CD8-positive, alpha-beta T cell (primary cell): ENCODE measurements at regions of chr4 and their contacts with region 1.

Region 1: GRCh38 chr4:99033956-99034355 is 38.4 kb downstream of the METAP1 start:
- DNase-seq: no peak
- ATAC-seq: no peak
- H3K4me3 ChIP-seq: no peak overlapping the region
- H3K4me3 Mint-ChIP-seq: no peak overlapping the region
- H3K27ac ChIP-seq: no peak overlapping the region
- H3K27ac Mint-ChIP-seq: no peak overlapping the region
- H3K4me1 ChIP-seq: no peaks in the 10 kb centered on the region
- H3K4me1 Mint-ChIP-seq: peaks cover 26% of the 10 kb centered on the region
- H3K27me3 ChIP-seq: no peaks in the 10 kb centered on the region
- H3K27me3 Mint-ChIP-seq: no peaks in the 10 kb centered on the region
- CTCF ChIP-seq: no peak

Region 2: DNA sequence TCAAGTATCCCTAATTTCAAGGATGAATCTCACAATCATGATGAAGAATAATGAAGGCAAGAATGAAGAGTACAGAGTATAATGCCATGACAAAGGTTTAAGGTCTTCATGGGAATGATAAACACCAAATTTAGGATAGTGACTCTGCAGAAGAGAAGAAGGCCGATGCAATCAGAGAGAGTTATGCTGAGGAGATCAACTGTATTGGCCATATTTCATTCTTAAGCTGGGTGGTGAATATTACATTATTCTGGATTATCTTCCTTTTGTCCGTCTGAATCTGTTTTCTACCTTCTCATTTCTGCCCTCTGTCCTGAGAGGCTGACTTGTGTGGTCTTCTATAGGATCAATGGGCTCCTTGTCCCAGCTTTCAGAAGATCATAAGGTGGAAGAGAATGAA is 46.2 kb before region 1 on chr4:
- CTCF ChIA-PET with region 1: no interaction called
- POLR2A ChIA-PET with region 1: no interaction called
- intact Hi-C with region 1: loop called in 1 of 2 experiments (anchors 1 kb)
- DNase-seq: no peak
- ATAC-seq: no peak
- H3K4me3 ChIP-seq: no peak overlapping the region
- H3K4me3 Mint-ChIP-seq: no peak overlapping the region
- H3K27ac ChIP-seq: no peak overlapping the region
- H3K27ac Mint-ChIP-seq: no peak overlapping the region
- H3K4me1 ChIP-seq: no peaks in the 10 kb centered on the region
- H3K4me1 Mint-ChIP-seq: no peaks in the 10 kb centered on the region
- H3K27me3 ChIP-seq: no peaks in the 10 kb centered on the region
- H3K27me3 Mint-ChIP-seq: peaks cover 4% of the 10 kb centered on the region
- CTCF ChIP-seq: no peak